Head of caudate nucleus (tissue), 42 donors: ENCODE measurements at regions of chr17 and their contacts with region 1.

Region 1: GRCh38 chr17:40909351-40909750 is 24.3 kb upstream of the KRT20 start:
- DNase-seq: peak; percentile 41 to 90 (median 77)

Region 2: GRCh38 chr17:40615295-40615988 is 293.9 kb before region 1 on chr17:
- intact Hi-C with region 1: no loop called
- DNase-seq: peak in 2 of 42 donors; percentile 15 to 42

Region 3: GRCh38 chr17:41322094-41322902 is 412.9 kb after region 1 on chr17:
- intact Hi-C with region 1: loop called (anchors 5 kb)
- DNase-seq: peak in 3 of 42 donors; percentile 11 to 39 (median 27)

Region 4: GRCh38 chr17:41548844-41549595 is 639.7 kb after region 1 on chr17:
- intact Hi-C with region 1: loop called (anchors 5 kb)
- DNase-seq: peak; percentile 64 to 91 (median 82)